Left cardiac atrium (tissue), 4 donors: ENCODE measurements at regions of chr9 and their contacts with region 1.

Region 1: GRCh38 chr9:21031091-21031807 is at the start of gene HACD4:
- DNase-seq: peak; percentile 65
- ATAC-seq: peak; percentile 93 to 97
- total RNA-seq, gene HACD4: 1.0 to 2.1 TPM

Region 2: DNA sequence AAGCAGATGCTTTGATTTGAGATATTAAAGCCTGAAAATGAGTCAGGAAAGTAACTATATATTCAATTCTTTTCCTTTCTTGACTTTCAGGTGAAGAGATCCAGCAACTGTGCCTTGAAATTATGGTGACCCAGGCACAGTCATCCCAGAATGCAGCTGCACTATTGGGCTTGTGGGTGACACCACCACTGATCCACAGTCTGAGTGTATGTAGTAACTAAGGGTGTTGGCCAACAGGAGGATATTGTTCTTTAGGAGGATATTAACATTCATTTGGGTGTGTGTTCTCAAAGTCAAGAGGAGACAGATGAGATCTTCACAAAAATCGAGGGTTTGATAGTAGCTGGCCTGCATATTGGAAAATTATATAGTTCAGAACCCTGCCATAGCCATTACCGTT is 53.0 kb before region 1 on chr9:
- intact Hi-C with region 1: loop called in 1 of 2 experiments (anchors 10 kb)
- DNase-seq: no peak
- ATAC-seq: no peak

Region 3: DNA sequence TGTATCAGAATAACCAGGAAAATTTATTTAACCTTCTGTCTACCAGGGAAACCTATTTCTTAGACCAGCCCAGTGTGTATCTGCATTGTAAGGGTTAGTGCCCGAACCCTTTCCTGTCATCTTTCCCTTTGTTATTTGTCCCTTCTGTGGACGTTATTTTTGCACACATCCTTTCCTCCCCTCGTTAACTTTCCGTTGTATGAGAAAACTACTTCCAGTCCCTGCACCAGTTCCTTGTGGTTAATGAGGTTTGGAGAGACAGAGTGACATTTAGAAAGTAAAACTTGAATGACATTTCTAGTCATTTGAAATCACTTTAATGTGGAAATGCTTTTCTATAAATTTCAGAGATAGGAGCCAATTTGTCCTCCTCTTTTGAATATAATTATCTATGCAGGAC is 50.8 kb after region 1 on chr9:
- intact Hi-C with region 1: no loop called
- DNase-seq: no peak
- ATAC-seq: no peak

Region 4: DNA sequence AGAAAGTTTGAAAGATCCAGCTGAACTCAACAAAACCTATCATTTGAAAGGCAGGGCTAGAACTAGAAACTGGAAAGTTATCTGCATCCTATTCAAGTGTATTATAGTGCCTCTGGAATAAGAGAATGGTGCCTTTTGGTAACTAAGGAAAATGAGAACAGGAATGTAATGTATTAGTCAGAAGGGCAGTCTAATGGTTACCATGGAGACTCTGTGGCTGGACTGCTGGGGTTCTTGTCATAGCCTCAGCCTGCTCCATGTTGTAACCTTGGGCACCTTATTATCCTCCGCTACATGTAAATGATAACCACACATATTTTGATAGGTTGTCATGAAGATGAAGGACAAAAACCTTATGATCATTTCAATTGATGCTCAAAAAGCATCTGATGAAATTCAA is 71.1 kb after region 1 on chr9:
- intact Hi-C with region 1: loop called in 1 of 2 experiments (anchors 10 kb)
- DNase-seq: no peak
- ATAC-seq: no peak